Spleen (tissue), 13 donors: ENCODE measurements at regions of chr10 and their contacts with region 1.

Region 1: DNA sequence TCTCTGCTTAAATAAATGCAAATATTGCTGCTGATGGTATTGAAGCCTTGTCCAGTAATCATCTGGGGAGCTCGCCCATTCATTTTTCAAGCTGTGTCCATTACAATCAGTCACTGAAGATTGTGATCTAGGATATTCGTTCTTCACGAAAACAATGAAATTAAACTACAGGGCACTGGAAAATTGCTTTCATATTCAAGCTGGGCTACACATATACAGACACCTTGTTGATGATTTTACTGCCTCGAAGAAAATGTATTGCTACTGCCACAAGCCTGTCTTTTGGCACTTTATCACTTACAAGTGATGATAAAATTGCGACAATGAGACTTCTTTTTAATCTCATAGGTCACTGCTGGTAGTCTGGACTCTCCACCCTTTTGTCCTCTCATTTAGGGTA is 100.0 kb upstream of the MINDY3 start:
- DNase-seq: no peak
- H3K4me3 ChIP-seq: no peak overlapping the region
- H3K27ac ChIP-seq: no peak overlapping the region
- H3K4me1 ChIP-seq: no peaks in the 10 kb centered on the region
- H3K27me3 ChIP-seq: no peaks in the 10 kb centered on the region
- CTCF ChIP-seq: no peak
- POLR2A ChIP-seq: no peak

Region 2: GRCh38 chr10:16225208-16225607 is 264.9 kb after region 1 on chr10:
- intact Hi-C with region 1: loop called (anchors 5 kb)
- DNase-seq: no peak
- H3K4me3 ChIP-seq: no peak overlapping the region
- H3K27ac ChIP-seq: no peak overlapping the region
- H3K4me1 ChIP-seq: no peaks in the 10 kb centered on the region
- H3K27me3 ChIP-seq: no peaks in the 10 kb centered on the region
- CTCF ChIP-seq: no peak
- POLR2A ChIP-seq: no peak